GM10248 (cell line): ENCODE measurements at regions of chr4 and their contacts with region 1.

Region 1: GRCh38 chr4:173301518-173302201 is 32.5 kb downstream of the HMGB2 start:
- DNase-seq: peak; percentile 36
- CTCF ChIP-seq: peak; percentile 58

Region 2: DNA sequence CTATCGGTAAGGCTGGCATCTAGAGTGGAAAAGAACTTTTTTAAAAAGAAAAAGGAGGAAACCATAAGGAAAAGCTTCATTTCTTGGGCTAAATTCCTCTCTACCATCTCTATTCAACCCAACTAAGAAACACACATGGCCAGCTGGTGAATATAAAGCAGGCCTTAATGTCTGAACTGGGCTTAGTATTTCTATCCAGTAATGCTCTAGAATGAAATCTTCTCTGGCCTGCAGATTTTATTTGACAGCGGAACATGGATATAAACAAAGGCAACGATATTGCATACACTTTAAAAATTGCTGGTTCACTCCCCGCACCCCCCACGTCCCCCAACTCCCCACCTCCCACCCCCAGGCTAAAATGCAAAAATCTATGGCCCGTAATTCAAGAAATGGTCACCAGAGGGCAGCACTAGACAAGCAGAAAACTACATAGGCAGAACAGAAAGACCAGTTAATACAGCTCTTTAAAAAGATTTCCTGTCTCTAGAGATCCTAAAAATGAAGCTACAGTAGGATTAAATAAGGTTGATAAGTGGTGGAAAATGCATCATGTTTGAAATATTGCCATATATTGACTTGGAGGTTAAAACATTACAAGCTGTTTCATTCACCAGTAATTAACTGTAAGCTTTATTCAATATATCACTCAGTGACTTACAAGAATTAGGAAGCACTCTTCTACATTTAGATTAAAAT is 288.3 kb before region 1 on chr4:
- CTCF ChIA-PET with region 1: interaction called, 82 read pairs
- POLR2A ChIA-PET with region 1: no interaction called
- DNase-seq: peak; percentile 57
- CTCF ChIP-seq: peak; percentile 65

Region 3: GRCh38 chr4:173168396-173169177 is 133.1 kb before region 1 on chr4 and contains the start of gene GALNT7:
- CTCF ChIA-PET with region 1: interaction called, 10 read pairs
- POLR2A ChIA-PET with region 1: no interaction called
- DNase-seq: peak; percentile 82
- CTCF ChIP-seq: no peak

Region 4: DNA sequence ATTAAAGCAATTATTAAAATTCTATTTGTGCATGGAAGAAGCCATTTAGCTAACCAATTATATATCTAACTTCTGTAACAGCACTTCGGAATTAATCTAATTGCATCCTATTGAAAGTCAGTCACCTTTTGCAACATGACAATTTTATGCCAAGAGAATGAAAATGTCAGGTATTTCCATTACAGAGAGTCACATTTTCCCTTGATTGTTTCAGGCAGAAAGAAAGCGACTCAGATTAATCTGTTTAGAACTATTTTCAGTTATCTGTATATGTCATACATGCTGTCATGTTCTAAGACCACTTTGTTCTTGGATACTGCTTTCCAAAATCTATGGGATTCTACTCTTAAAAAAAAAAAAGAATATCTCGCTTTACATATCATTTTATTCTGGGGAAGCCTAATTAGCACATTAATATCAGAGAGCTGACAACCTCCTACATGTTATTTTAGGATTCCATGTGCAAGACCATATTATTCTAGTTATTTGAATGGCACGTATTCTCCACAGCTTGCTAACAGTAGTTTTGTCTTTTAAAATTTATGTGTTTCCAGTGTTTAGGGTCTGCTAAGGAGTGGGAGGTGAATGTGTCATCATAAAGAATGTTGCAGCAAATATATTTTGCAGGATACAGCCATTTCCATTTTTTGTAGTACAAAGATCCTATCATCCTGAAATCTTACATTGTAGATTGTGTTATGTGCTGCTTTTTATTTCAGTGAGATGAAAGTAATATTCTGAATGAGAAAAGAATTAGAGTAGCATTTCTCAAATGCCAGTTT is 101.4 kb before region 1 on chr4:
- CTCF ChIA-PET with region 1: no interaction called
- POLR2A ChIA-PET with region 1: no interaction called
- DNase-seq: no peak
- CTCF ChIP-seq: no peak

Region 5: GRCh38 chr4:173270312-173271027 is 31.2 kb before region 1 on chr4:
- CTCF ChIA-PET with region 1: interaction called, 54 read pairs
- POLR2A ChIA-PET with region 1: no interaction called
- DNase-seq: no peak
- CTCF ChIP-seq: no peak

Region 6: GRCh38 chr4:173318648-173319211 is 17.1 kb after region 1 on chr4:
- CTCF ChIA-PET with region 1: interaction called, 84 read pairs
- POLR2A ChIA-PET with region 1: no interaction called
- DNase-seq: no peak
- CTCF ChIP-seq: peak; percentile 9

Region 7: GRCh38 chr4:173405840-173406606 is 104.4 kb after region 1 on chr4:
- CTCF ChIA-PET with region 1: interaction called, 10 read pairs
- POLR2A ChIA-PET with region 1: no interaction called
- DNase-seq: peak; percentile 20
- CTCF ChIP-seq: no peak